ENCODE measurements at regions of chrX and their contacts with region 1.

Region 1: GRCh38 chrX:53317365-53318069 is 36.1 kb upstream of the IQSEC2 start:
- DNase-seq: peak; percentile 74 to 79 (median 78)
- ATAC-seq: peak; percentile 91
- H3K4me3 ChIP-seq: no peak overlapping the region
- H3K27ac ChIP-seq: no peak overlapping the region
- H3K4me1 ChIP-seq: peaks cover 15 to 43% of the 10 kb centered on the region in 2 experiments; a peak in 4 of 5 replicates
- H3K27me3 ChIP-seq: peaks cover 22 to 35% of the 10 kb centered on the region in 2 experiments; a peak in 4 of 5 replicates
- CTCF ChIP-seq: peak; percentile 80 to 83 (median 82)
- EP300 ChIP-seq: no peak
- POLR2A ChIP-seq: no peak
- RAD21 ChIP-seq: peak; percentile 66 to 89

Region 2: DNA sequence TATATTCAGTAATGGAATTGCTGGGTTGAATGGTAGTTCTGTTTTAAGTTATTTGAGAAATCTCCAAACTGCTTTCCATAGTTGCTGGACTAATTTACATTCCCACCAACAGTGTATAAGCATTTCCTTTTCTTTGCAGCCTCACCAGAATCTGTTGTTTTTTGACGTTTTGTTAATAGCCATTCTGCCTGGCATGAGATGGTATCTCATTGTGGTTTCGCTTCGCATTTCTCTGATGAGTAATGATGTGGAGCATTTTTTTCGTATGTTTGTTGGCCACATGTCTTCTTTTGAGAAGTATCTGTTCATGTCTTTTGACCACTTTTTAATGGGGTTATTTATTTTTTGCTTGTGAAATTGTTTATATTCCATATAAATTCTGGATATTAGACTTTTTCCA is 1234.9 kb before region 1 on chrX:
- CTCF ChIA-PET with region 1: no interaction called
- POLR2A ChIA-PET with region 1: no interaction called
- in situ Hi-C with region 1: no loop called
- intact Hi-C with region 1: no loop called
- DNase-seq: no peak
- ATAC-seq: no peak
- H3K4me3 ChIP-seq: no peak overlapping the region
- H3K27ac ChIP-seq: no peak overlapping the region
- H3K4me1 ChIP-seq: no peaks in the 10 kb centered on the region
- H3K27me3 ChIP-seq: no peaks in the 10 kb centered on the region
- CTCF ChIP-seq: no peak
- EP300 ChIP-seq: no peak
- POLR2A ChIP-seq: no peak
- RAD21 ChIP-seq: no peak

Region 3: GRCh38 chrX:53374222-53374820 is 56.8 kb after region 1 on chrX:
- CTCF ChIA-PET with region 1: no interaction called
- POLR2A ChIA-PET with region 1: interaction called, 7 read pairs
- in situ Hi-C with region 1: no loop called
- intact Hi-C with region 1: loop called (anchors 5 kb)
- DNase-seq: peak; percentile 69 to 81 (median 76)
- ATAC-seq: peak; percentile 86
- H3K4me3 ChIP-seq: peak overlapping the region; percentile 12; the same call in 1 of the 2 replicates
- H3K27ac ChIP-seq: peak overlapping the region; percentile 99
- H3K4me1 ChIP-seq: peaks cover 10 to 30% of the 10 kb centered on the region in 2 experiments
- H3K27me3 ChIP-seq: no peaks in the 10 kb centered on the region
- CTCF ChIP-seq: peak in 2 of 3 experiments; percentile 4 to 15; a peak in 1 of 6 replicates
- EP300 ChIP-seq: peak; percentile 54
- POLR2A ChIP-seq: peak; percentile 63; the same call in 1 of the 2 replicates
- RAD21 ChIP-seq: peak in 1 of 2 experiments; percentile 24; a peak in 1 of 4 replicates

Region 4: GRCh38 chrX:53433651-53434639 is 116.4 kb after region 1 on chrX and contains the start of gene HSD17B10:
- CTCF ChIA-PET with region 1: interaction called, 10 read pairs
- POLR2A ChIA-PET with region 1: interaction called, 3 read pairs
- in situ Hi-C with region 1: no loop called
- intact Hi-C with region 1: loop called (anchors 1 kb)
- DNase-seq: peak; percentile 93 to 95 (median 93)
- ATAC-seq: peak; percentile 99
- H3K4me3 ChIP-seq: peak within 1 kb of the TSS; percentile 69
- H3K27ac ChIP-seq: peak within 1 kb of the TSS; percentile 72
- H3K4me1 ChIP-seq: peaks cover 5 to 16% of the 10 kb centered on the region in 2 experiments; a peak in 3 of 5 replicates
- H3K27me3 ChIP-seq: no peaks in the 10 kb centered on the region
- CTCF ChIP-seq: no peak
- EP300 ChIP-seq: no peak
- POLR2A ChIP-seq: peak; percentile 89
- RAD21 ChIP-seq: no peak
- polyA plus RNA-seq, gene HSD17B10: 45.3 to 67.9 TPM

Region 5: GRCh38 chrX:53445977-53446376 is 128.5 kb after region 1 on chrX:
- CTCF ChIA-PET with region 1: interaction called, 7 read pairs
- POLR2A ChIA-PET with region 1: interaction called, 4 read pairs
- in situ Hi-C with region 1: loop called (anchors 5 kb)
- intact Hi-C with region 1: loop called (anchors 1 kb)
- DNase-seq: peak; percentile 47 to 68 (median 48)
- ATAC-seq: peak; percentile 96
- H3K4me3 ChIP-seq: no peak overlapping the region
- H3K27ac ChIP-seq: no peak overlapping the region
- H3K4me1 ChIP-seq: no peaks in the 10 kb centered on the region
- H3K27me3 ChIP-seq: no peaks in the 10 kb centered on the region; a peak in 3 of 5 replicates
- CTCF ChIP-seq: peak; percentile 76 to 77 (median 77)
- EP300 ChIP-seq: no peak
- POLR2A ChIP-seq: no peak
- RAD21 ChIP-seq: peak; percentile 13 to 76; a peak in 2 of 4 replicates

Region 6: GRCh38 chrX:53481816-53482465 is 164.4 kb after region 1 on chrX:
- CTCF ChIA-PET with region 1: no interaction called
- POLR2A ChIA-PET with region 1: interaction called, 3 read pairs
- in situ Hi-C with region 1: no loop called
- intact Hi-C with region 1: loop called (anchors 5 kb)
- DNase-seq: peak; percentile 10 to 59 (median 18)
- ATAC-seq: peak; percentile 64
- H3K4me3 ChIP-seq: no peak overlapping the region
- H3K27ac ChIP-seq: no peak overlapping the region
- H3K4me1 ChIP-seq: no peaks in the 10 kb centered on the region
- H3K27me3 ChIP-seq: no peaks in the 10 kb centered on the region
- CTCF ChIP-seq: peak; percentile 55 to 59 (median 59)
- EP300 ChIP-seq: no peak
- POLR2A ChIP-seq: no peak
- RAD21 ChIP-seq: peak in 1 of 2 experiments; percentile 48; a peak in 2 of 4 replicates

Region 7: GRCh38 chrX:53831662-53832635 is 514.4 kb after region 1 on chrX:
- CTCF ChIA-PET with region 1: no interaction called
- POLR2A ChIA-PET with region 1: no interaction called
- in situ Hi-C with region 1: no loop called
- intact Hi-C with region 1: loop called (anchors 10 kb)
- DNase-seq: peak; percentile 13 to 38 (median 20)
- ATAC-seq: peak; percentile 90
- H3K4me3 ChIP-seq: no peak overlapping the region
- H3K27ac ChIP-seq: no peak overlapping the region
- H3K4me1 ChIP-seq: no peaks in the 10 kb centered on the region
- H3K27me3 ChIP-seq: no peaks in the 10 kb centered on the region
- CTCF ChIP-seq: peak; percentile 45 to 56 (median 49); a peak in 4 of 6 replicates
- EP300 ChIP-seq: no peak
- POLR2A ChIP-seq: no peak
- RAD21 ChIP-seq: peak; percentile 52 to 67

Measured in K562 (cell line).